Posterior vena cava (tissue), 2 donors: ENCODE measurements at regions of chr17 and their contacts with region 1.

Region 1: DNA sequence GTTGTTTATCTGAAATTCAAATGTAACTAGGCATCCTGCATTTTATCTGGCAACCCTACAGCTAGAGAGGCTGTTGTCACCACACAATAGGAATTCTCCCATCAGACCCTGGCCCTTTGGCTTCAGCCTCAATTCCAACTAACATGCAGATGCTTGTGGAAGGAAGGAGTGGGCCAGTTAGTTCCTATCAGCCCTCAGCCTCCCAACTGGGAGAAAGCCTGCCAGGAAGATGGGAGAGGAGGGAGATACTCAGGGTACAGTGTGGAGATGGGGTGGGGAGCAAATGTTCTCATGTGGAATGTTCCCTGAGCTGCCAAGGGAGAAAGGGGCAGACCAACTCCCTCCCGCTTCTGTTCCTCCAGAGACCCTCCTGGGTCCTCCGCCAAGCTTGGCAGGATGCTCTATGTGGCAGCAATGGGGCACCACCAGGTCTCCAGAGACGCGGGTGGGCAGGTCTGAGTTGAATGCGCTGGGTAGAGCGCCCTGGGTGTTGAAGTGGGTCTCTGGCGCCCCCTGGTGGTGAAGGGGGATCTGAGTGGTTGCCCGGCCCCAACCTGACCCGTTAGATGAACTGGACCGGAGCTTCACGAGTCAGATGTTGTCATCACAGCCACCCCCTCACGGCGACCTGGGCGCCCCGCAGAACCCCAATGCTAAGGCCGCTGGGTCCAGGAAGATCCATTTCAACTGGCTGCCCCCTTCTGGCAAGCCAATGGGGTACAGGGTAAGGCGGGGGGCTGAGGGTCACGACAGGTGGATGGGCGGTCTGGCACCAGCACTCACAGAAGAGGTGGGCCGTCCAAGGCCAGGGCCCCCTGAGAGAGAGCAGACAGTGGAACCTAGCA is 15.2 kb downstream of the GALK1 start:
- DNase-seq: peak; percentile 96

Region 2: DNA sequence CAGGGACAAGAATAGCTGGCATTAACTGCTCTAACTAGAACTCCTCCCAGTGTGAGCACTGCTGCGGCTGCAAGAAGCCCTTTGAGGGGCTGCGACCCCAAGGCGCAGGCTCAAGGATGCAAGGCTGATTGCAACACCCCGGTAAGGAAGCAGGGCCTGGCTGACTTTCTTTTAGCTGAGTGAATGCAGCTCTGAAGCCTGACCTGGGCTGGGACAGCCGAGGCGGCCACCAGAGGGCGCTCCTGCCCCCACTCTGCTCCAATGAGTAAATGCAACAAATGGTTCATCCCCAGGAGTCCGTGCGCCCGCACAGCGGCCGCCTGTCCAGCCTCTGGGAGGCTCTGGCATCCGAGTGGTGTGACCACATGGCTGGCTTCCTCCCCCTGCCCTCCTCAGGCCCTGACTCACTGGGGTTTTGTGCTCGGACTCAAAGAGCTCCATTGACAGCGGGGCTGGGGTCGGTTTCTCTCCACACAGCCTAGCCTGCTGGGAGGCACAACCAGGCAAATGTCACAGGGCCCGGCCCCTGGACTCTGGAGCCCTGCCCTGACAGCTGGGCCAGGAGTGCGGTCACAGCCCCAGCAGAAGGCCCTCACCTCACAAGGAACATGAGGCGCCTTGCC is 116.8 kb before region 1 on chr17 and contains the start of gene SMIM5:
- intact Hi-C with region 1: loop called (anchors 2 to 5 kb)
- DNase-seq: peak; percentile 97
- total RNA-seq, gene SMIM5: 0.38 to 0.97 TPM

Region 3: GRCh38 chr17:75679706-75680442 is 69.9 kb before region 1 on chr17:
- intact Hi-C with region 1: loop called (anchors 1 to 5 kb)
- DNase-seq: peak; percentile 71

Region 4: GRCh38 chr17:75712446-75712845 is 37.3 kb before region 1 on chr17:
- intact Hi-C with region 1: no loop called
- DNase-seq: no peak

Region 5: GRCh38 chr17:75827252-75828115 is 77.7 kb after region 1 on chr17:
- intact Hi-C with region 1: loop called in 1 of 2 experiments (anchors 10 kb)
- DNase-seq: peak; percentile 89

Region 6: DNA sequence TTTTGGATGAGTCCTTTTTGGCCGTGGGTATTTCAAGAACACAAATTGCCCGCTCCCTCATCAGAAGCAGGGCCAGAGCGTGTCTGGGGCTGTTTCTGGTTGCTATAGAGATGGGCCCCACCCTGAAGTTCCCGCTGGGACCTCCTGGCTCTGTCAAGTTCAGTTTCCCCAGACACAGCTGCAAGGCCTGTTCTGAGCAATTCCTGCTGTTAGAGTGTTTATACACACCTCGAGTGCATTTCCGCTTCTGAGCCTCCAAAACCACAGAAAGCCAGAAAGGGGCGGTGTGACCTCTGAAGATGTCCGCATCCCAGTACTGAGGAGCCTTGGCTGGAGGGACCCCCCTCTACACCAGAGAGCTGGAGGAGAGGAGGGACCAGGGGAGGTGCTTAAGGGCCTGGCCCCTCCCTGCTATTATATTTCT is 114.7 kb after region 1 on chr17:
- intact Hi-C with region 1: no loop called
- DNase-seq: peak; percentile 88